ENCODE measurements at regions of chr4 and their contacts with region 1.

Region 1: GRCh38 chr4:86633854-86634253 is 39.7 kb downstream of the PTPN13 start:
- H3K4me3 Mint-ChIP-seq: no peak overlapping the region
- H3K27ac Mint-ChIP-seq: no peak overlapping the region
- H3K4me1 Mint-ChIP-seq: no peaks in the 10 kb centered on the region
- H3K27me3 Mint-ChIP-seq: no peaks in the 10 kb centered on the region

Region 2: GRCh38 chr4:86256086-86256485 is 377.8 kb before region 1 on chr4:
- intact Hi-C with region 1: loop called (anchors 5 kb)
- H3K4me3 Mint-ChIP-seq: no peak overlapping the region
- H3K27ac Mint-ChIP-seq: no peak overlapping the region
- H3K4me1 Mint-ChIP-seq: no peaks in the 10 kb centered on the region
- H3K27me3 Mint-ChIP-seq: no peaks in the 10 kb centered on the region